Activated CD8-positive, alpha-beta T cell treated with anti-CD3 and anti-CD28 coated beads for 36 hours (primary cell): ENCODE measurements at regions of chr11 and their contacts with region 1.

Region 1: DNA sequence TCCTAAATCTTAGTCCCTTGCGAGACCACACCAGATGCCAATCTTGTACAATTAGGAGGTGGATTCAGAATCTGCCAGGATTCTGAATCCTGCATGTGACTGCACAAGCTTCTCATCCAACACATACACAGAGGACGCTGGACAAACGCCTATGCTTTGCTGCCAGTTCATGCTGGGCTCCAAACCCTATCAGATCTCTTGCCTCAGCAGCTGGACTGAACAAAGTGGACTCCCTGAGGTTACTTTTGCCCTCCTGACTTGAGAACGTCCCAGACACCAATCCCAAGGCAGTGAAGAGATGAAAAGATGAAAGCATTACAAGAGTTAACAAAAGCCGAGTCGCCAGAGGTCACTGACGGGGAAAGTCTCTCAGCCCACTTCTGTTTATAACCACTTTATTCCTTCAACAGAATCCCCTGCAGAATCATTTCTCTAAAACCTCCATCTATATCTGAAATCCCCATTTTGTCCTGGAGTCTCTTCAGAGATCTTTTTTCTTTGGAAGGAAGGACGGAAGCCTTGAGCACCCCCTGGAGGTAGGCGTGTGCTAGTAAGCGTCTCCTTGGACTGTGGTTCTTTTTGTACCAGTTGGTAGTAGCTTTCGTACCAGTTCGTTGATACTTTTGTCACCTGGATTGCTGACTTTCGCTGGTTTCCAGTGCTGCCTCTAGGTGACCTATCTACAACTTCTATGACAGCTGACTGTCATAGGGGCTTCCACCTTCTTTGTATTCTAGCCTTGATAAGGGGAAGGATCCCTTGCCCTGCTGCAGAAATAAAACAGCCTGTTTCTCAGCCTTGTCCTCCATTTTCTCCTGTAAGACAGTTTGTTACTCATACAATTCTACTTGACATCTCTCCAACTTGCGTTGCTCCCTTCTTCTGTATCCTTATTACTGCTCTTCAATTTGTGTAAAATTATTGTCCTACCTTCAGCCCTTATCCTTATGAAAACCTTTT is 26.1 kb upstream of the EED start:
- DNase-seq: peak; percentile 69
- ATAC-seq: peak; percentile 48
- H3K4me3 Mint-ChIP-seq: peak overlapping the region; percentile 48
- H3K27ac Mint-ChIP-seq: peak overlapping the region; percentile 86
- H3K4me1 Mint-ChIP-seq: peaks cover 67% of the 10 kb centered on the region
- H3K27me3 Mint-ChIP-seq: peaks cover 3% of the 10 kb centered on the region
- CTCF ChIP-seq: peak; percentile 86

Region 2: GRCh38 chr11:86162239-86162638 is 56.2 kb before region 1 on chr11:
- CTCF ChIA-PET with region 1: no interaction called
- POLR2A ChIA-PET with region 1: no interaction called
- intact Hi-C with region 1: no loop called
- DNase-seq: no peak
- ATAC-seq: no peak
- H3K4me3 Mint-ChIP-seq: no peak overlapping the region
- H3K27ac Mint-ChIP-seq: no peak overlapping the region
- H3K4me1 Mint-ChIP-seq: peaks cover 10% of the 10 kb centered on the region
- H3K27me3 Mint-ChIP-seq: no peaks in the 10 kb centered on the region
- CTCF ChIP-seq: no peak

Region 3: GRCh38 chr11:86202013-86202336 is 16.4 kb before region 1 on chr11:
- CTCF ChIA-PET with region 1: interaction called, 22 read pairs
- POLR2A ChIA-PET with region 1: interaction called, 5 read pairs
- intact Hi-C with region 1: no loop called
- DNase-seq: peak; percentile 40
- ATAC-seq: peak; percentile 90
- H3K4me3 Mint-ChIP-seq: no peak overlapping the region
- H3K27ac Mint-ChIP-seq: no peak overlapping the region
- H3K4me1 Mint-ChIP-seq: peaks cover 6% of the 10 kb centered on the region
- H3K27me3 Mint-ChIP-seq: no peaks in the 10 kb centered on the region
- CTCF ChIP-seq: no peak

Region 4: DNA sequence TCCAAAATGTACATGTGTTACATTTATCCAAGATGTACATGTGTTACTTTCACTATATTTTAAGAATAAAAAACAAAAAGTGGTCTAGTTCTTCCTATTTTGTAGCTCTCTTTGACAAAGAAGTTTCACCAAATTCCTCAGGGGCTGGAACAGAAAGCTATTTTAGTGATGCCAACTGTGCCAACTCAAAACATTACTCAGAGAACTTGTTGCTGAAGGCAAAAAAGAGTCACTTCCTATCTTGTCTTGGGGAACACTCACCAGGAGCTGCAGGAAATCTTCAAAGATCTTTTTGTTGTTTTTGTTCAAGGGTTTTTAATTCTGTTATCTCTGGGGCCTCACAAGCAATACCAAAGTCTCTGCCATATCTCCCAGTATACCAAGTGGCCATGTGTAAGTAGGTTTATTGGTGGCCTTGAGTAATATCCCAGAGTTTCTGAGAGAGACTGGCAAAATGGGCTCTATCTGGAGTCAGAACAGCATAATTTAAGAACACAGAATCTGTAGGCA is 12.6 kb after region 1 on chr11:
- CTCF ChIA-PET with region 1: interaction called, 9 read pairs
- POLR2A ChIA-PET with region 1: interaction called, 10 read pairs
- intact Hi-C with region 1: no loop called
- DNase-seq: no peak
- ATAC-seq: no peak
- H3K4me3 Mint-ChIP-seq: peak overlapping the region; percentile 19
- H3K27ac Mint-ChIP-seq: peak overlapping the region; percentile 64
- H3K4me1 Mint-ChIP-seq: peaks cover 65% of the 10 kb centered on the region
- H3K27me3 Mint-ChIP-seq: no peaks in the 10 kb centered on the region
- CTCF ChIP-seq: no peak